Heart left ventricle (tissue), 16 donors: ENCODE measurements at regions of chr16 and their contacts with region 1.

Region 1: DNA sequence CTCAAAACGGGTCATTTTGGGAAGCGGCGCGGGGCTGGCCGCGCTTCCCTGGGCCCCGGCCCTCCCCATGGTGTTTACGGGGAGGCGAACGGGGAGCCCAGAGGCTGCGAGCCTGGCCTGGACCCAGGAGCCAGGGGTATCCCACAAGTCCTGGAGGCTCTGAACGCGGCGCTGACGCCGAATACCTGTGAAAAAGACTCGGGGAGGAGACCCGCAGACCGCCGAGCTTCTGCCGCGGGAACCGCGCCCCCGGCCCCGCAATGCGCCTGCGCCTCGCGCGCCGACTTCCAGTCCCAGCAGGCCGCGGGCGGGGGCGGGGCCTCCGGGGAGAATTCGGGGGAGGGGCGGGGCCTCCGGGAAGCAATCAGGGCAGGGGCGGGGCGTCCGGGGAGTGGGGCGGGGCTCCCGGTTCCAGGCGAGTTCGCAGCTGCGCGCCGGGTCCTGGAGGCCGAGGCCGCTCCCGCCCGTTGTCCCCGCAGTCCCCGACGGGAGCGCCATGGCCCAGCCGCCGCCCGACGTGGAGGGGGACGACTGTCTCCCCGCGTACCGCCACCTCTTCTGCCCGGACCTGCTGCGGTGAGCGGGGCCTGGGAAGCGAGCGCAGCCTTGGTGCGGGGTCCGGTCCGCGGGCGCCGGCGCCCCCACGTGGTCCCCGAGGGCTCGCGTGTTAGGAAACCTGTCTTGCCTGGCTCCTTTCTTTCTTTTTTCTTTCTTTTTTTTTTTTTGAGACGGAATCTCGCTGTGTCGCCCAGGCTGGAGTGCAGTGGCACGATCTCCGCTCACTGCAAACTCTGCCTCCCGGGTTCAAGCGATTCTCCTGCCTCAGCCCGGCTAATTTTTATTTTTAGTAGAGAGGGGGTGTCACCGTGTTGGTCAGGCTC is at the start of gene DECR2:
- DNase-seq: peak; percentile 96 to 98 (median 97)
- ATAC-seq: peak; percentile 68 to 93 (median 89)
- H3K4me3 ChIP-seq: peak within 1 kb of the TSS; percentile 56 to 98 (median 89)
- H3K27ac ChIP-seq: peak within 1 kb of the TSS; percentile 82 to 95 (median 92)
- H3K4me1 ChIP-seq: peaks cover 0 to 33% (median 12%) of the 10 kb centered on the region in 12 donors
- H3K27me3 ChIP-seq: no peaks in the 10 kb centered on the region
- CTCF ChIP-seq: peak; percentile 24 to 83 (median 60)
- POLR2A ChIP-seq: peak in 1 of 2 donors; percentile 85
- total RNA-seq, gene DECR2: 6.9 to 20.6 (median 12.2) TPM

Region 2: GRCh38 chr16:318628-319027 is 83.1 kb before region 1 on chr16:
- intact Hi-C with region 1: no loop called
- DNase-seq: no peak
- ATAC-seq: peak in 1 of 4 donors; percentile 23
- H3K4me3 ChIP-seq: no peak overlapping the region
- H3K27ac ChIP-seq: no peak overlapping the region
- H3K4me1 ChIP-seq: no peaks in the 10 kb centered on the region
- H3K27me3 ChIP-seq: no peaks in the 10 kb centered on the region
- CTCF ChIP-seq: no peak
- POLR2A ChIP-seq: no peak

Region 3: DNA sequence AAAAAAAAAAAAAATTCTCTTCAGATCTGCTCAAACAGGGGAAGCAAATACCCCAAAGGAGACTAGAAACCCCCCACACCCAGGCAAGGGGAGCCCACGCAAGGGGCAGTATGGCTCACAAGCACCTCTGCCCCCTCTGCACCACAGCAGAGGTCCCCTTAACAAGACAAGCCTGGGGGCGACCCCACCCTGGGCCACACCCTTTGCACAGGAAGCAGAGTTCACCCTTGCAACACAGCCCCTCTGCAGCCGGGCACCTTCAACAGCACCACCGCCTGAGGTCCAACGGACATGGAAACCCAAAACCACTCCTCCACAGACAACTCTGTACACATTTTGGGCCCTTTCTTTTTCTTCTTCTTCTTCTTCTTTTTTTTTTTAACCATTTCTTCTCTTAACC is 62.0 kb before region 1 on chr16:
- intact Hi-C with region 1: no loop called
- DNase-seq: peak in 1 of 5 donors; percentile 38
- ATAC-seq: no peak
- H3K4me3 ChIP-seq: no peak overlapping the region
- H3K27ac ChIP-seq: peak overlapping the region in 1 of 12 donors; percentile 3
- H3K4me1 ChIP-seq: peaks cover 0 to 44% (median 2%) of the 10 kb centered on the region in 12 donors
- H3K27me3 ChIP-seq: no peaks in the 10 kb centered on the region
- CTCF ChIP-seq: no peak
- POLR2A ChIP-seq: no peak

Region 4: GRCh38 chr16:381789-382717 is 19.7 kb before region 1 on chr16 and contains the start of gene PGAP6:
- intact Hi-C with region 1: loop called in 1 of 10 experiments (anchors 2 kb)
- DNase-seq: peak in 4 of 5 donors; percentile 72 to 84 (median 79)
- ATAC-seq: peak; percentile 43 to 80 (median 68)
- H3K4me3 ChIP-seq: peak within 1 kb of the TSS; percentile 70 to 100 (median 90)
- H3K27ac ChIP-seq: peak within 1 kb of the TSS; percentile 54 to 92 (median 83)
- H3K4me1 ChIP-seq: peaks cover 0 to 56% (median 29%) of the 10 kb centered on the region in 12 donors
- H3K27me3 ChIP-seq: no peaks in the 10 kb centered on the region
- CTCF ChIP-seq: no peak
- POLR2A ChIP-seq: peak in 1 of 2 donors; percentile 62
- total RNA-seq, gene PGAP6: 32.3 to 65.3 (median 44.9) TPM